Activated T-helper 2 cell treated with anti-CD3 and anti-CD28 coated beads, Interferon-gamma antibody, Interleukin-2, Interleukin-4, amounts not matched to agents 10 μg/mL and 5 μg/mL and 100 μg/mL, durations not matched to agents 14 hours and 24 hours and 36 hours (primary cell): ENCODE measurements at regions of chr1 and their contacts with region 1.

Region 1: DNA sequence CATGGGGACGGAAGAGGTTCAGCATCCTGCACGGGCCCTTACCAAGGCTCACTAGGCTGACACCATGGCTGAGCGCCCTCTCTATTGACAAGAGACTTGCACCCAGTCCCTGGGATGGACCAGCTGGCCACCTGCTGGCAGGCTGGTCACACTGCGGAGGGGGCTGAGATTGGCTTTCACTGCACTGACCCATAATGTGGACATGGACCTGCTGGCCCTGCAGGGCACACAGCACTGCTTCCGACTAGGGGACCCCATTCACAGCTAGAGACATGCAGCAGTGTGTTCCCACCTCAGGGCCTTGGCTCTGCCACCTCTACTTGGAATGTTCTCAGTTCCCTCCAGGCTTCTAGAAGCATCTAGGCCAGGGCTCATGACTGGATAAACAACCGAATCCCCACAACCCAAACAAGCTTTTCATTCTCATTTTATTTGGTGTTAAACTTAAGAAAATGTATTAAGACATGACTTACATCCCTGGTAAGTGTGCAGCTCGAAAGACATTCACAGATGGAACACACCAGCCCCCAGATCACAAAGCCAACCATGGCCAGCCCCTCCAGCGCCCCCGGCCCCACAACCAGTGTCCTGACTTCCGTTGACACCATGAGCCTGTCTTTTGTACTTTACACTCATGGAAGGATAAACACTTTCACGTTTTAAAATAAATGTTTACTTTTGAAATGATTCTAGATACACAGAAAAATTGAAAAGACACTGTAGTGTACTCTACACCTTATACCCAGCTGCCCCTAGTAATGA is 9.3 kb upstream of the SRARP start:
- DNase-seq: peak; percentile 20
- H3K4me3 Mint-ChIP-seq: no peak overlapping the region
- H3K27ac Mint-ChIP-seq: no peak overlapping the region
- H3K4me1 Mint-ChIP-seq: no peaks in the 10 kb centered on the region
- H3K27me3 Mint-ChIP-seq: peaks cover 8% of the 10 kb centered on the region

Region 2: GRCh38 chr1:15820478-15820877 is 174.3 kb before region 1 on chr1:
- intact Hi-C with region 1: loop called (anchors 1 kb)
- DNase-seq: no peak
- H3K4me3 Mint-ChIP-seq: no peak overlapping the region
- H3K27ac Mint-ChIP-seq: no peak overlapping the region
- H3K4me1 Mint-ChIP-seq: peaks cover 6% of the 10 kb centered on the region
- H3K27me3 Mint-ChIP-seq: no peaks in the 10 kb centered on the region

Region 3: GRCh38 chr1:15937706-15938168 is 57.0 kb before region 1 on chr1:
- intact Hi-C with region 1: no loop called
- DNase-seq: no peak
- H3K4me3 Mint-ChIP-seq: no peak overlapping the region
- H3K27ac Mint-ChIP-seq: peak overlapping the region; percentile 77
- H3K4me1 Mint-ChIP-seq: peaks cover 12% of the 10 kb centered on the region
- H3K27me3 Mint-ChIP-seq: no peaks in the 10 kb centered on the region